Common myeloid progenitor, CD34-positive (primary cell): ENCODE measurements at regions of chr2 and their contacts with region 1.

Region 1: DNA sequence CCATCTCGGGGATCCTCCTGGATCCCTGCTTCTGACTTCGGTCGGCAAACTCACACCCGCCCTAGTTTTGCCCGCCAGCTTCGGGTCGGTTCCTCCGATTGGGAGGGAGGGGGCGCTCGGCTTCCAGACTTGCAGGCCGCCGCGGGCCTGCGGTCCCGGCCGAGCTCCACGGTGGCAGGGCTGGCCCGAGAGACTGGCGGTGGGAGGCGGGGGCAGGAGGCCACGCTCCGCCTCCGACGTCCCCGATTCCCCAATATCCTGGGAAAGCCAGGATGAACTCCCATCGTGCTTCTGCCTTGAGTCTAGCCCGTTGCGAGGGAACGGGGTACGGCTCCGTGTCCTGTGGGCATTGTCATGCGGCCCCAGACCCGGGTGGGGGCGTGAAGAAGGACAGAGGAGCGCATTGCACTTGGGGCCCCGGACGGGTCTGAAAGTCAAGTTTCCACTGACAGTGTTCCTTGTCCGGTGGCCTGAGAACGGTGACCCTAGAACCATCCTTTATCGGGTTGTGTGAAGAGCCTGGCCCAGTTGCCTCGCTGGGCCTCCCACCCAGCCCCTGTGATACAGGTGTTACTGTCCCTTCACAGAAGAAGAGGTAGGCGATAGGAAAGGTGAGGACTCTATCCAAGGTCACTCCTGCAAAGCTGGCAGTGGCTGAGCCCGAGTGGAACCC is 2.4 kb upstream of the INHBB start:
- DNase-seq: peak; percentile 77 to 85 (median 85)
- H3K4me3 ChIP-seq: peak overlapping the region in 3 of 7 experiments; percentile 11 to 45 (median 19)
- H3K27ac ChIP-seq: no peak overlapping the region
- H3K4me1 ChIP-seq: peaks cover 0 to 45% (median 29%) of the 10 kb centered on the region in 4 experiments
- H3K27me3 ChIP-seq: peaks cover 0 to 96% (median 43%) of the 10 kb centered on the region in 5 experiments

Region 2: DNA sequence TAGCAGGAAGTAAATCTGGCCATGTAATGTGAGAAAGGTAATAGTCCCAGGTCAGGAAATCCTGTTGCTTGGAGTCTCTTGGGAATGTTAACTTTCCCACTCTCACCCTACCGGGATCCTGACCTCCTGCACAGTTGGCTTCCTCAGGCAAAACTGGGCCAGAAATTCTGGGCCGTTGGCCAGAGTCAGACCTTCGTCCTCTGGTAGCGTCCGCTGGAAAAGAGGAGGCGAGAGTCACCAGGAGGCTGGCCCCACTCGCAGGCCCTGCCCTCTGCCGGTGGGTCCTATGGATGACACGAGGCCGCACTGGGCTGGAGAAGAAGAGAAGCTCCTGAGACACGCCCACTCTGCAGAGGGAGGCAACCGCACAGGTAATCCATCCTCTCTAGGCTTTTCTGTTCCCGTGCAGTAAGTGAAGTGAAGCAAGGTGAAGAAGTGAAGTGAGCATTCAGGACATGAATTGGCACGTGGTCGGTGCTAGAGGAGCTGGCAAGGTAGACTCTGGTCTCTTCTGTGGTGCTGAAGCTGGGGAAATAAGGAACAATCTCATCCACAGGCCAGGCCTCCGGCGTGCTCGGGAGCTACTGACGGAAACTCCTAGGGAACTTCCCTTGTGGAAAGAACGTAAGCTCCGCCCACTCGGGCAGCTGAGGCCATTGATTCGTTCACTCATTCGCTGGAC is 209.4 kb after region 1 on chr2:
- CTCF ChIA-PET with region 1: interaction called, 20 read pairs
- POLR2A ChIA-PET with region 1: no interaction called
- DNase-seq: peak; percentile 15 to 56 (median 48)
- H3K4me3 ChIP-seq: no peak overlapping the region
- H3K27ac ChIP-seq: no peak overlapping the region
- H3K4me1 ChIP-seq: peaks cover 0 to 2% (median 0%) of the 10 kb centered on the region in 4 experiments
- H3K27me3 ChIP-seq: peaks cover 0 to 31% (median 11%) of the 10 kb centered on the region in 5 experiments

Region 3: GRCh38 chr2:120856421-120856862 is 512.9 kb after region 1 on chr2:
- CTCF ChIA-PET with region 1: no interaction called
- POLR2A ChIA-PET with region 1: no interaction called
- DNase-seq: no peak
- H3K4me3 ChIP-seq: no peak overlapping the region
- H3K27ac ChIP-seq: no peak overlapping the region
- H3K4me1 ChIP-seq: no peaks in the 10 kb centered on the region
- H3K27me3 ChIP-seq: no peaks in the 10 kb centered on the region